IMR-90 (cell line): ENCODE measurements at regions of chr15 and their contacts with region 1.

Region 1: DNA sequence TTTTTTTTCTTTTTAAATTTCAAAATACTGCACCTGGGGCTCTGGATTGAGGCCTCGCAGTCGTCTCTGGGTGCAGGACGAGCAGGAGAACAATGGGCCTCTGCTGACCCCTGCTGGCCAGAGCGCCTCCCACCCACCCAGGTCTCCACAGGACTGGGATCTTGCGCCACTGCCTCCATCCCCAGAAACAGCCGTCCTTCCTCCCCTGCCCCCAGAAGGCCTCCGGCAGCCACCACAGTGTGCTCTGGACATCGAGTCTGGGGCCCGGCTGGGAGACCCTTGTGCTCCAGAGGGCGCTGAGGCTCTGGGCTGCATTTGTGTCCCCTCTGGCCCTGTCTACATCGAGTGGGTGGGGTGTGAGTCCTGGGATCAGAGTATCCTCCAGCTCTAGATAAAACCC is 6.6 kb upstream of the ACSBG1 start:
- DNase-seq: peak; percentile 59
- ATAC-seq: peak; percentile 99
- H3K4me3 ChIP-seq: no peak overlapping the region
- H3K27ac ChIP-seq: no peak overlapping the region
- H3K4me1 ChIP-seq: no peaks in the 10 kb centered on the region
- H3K27me3 ChIP-seq: peaks cover 20% of the 10 kb centered on the region
- CTCF ChIP-seq: peak; percentile 92
- POLR2A ChIP-seq: 0 out of 2 replicates have a peak, but pooled peaks have one; percentile 32
- RAD21 ChIP-seq: peak; percentile 91

Region 2: GRCh38 chr15:77901974-77902750 is 338.8 kb before region 1 on chr15:
- CTCF ChIA-PET with region 1: interaction called, 3 read pairs
- POLR2A ChIA-PET with region 1: no interaction called
- dilution Hi-C with region 1: no loop called
- in situ Hi-C with region 1: no loop called
- intact Hi-C with region 1: loop called (anchors 5 kb)
- DNase-seq: no peak
- ATAC-seq: no peak
- H3K4me3 ChIP-seq: no peak overlapping the region
- H3K27ac ChIP-seq: no peak overlapping the region
- H3K4me1 ChIP-seq: no peaks in the 10 kb centered on the region
- H3K27me3 ChIP-seq: peaks cover 12% of the 10 kb centered on the region; the same call in 1 of the 2 replicates
- CTCF ChIP-seq: 0 out of 2 replicates have a peak, but pooled peaks have one; percentile 11
- POLR2A ChIP-seq: no peak
- RAD21 ChIP-seq: no peak

Region 3: GRCh38 chr15:77959432-77959879 is 281.6 kb before region 1 on chr15:
- CTCF ChIA-PET with region 1: interaction called, 5 read pairs
- POLR2A ChIA-PET with region 1: no interaction called
- dilution Hi-C with region 1: no loop called
- in situ Hi-C with region 1: loop called (anchors 5 kb)
- intact Hi-C with region 1: loop called (anchors 1 kb)
- DNase-seq: peak; percentile 41
- ATAC-seq: peak; percentile 100
- H3K4me3 ChIP-seq: no peak overlapping the region
- H3K27ac ChIP-seq: no peak overlapping the region
- H3K4me1 ChIP-seq: no peaks in the 10 kb centered on the region
- H3K27me3 ChIP-seq: peaks cover 46% of the 10 kb centered on the region
- CTCF ChIP-seq: peak; percentile 90
- POLR2A ChIP-seq: no peak
- RAD21 ChIP-seq: peak; percentile 92

Region 4: DNA sequence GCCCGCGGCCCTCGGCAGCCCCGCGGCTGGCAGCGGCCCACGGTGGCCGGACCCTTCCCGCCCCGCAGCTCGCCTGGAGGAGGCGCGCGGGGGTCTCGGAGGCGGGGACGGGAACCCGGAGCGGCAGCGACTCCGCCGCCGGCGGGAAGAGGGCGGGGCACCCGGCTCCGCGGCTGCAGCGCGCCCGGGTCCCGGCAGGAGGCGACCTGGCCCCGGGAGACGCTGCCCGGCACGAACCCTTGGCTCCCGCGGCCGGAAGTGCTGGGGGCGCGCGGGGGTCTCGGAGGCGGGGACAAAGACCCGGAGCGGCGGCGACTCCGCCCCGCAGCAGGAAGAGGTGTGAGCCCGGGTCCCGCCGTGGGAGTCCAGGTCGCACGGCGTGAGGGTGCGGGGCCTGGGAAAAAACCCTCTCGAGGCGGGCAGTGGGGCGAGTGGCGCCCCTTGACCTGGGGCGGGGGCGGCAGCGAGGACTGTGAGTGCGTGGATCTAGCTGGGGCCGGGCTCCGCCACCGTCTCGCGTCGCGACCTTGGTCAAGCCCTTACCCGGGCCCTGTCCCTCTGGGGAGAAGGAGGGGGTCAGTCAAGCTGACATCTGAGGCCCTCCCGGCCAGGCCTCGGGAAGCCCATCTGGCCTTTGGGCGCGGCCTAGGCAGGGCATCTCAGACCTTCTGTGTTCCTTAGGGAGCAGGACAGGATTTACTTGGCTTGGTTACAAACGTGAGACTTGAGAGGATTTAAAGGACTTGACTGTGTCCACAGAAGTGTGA is 109.5 kb before region 1 on chr15 and contains the start of gene CIB2:
- CTCF ChIA-PET with region 1: interaction called, 4 read pairs
- POLR2A ChIA-PET with region 1: no interaction called
- dilution Hi-C with region 1: no loop called
- in situ Hi-C with region 1: no loop called
- intact Hi-C with region 1: loop called (anchors 5 kb)
- DNase-seq: peak; percentile 41
- ATAC-seq: peak; percentile 96
- H3K4me3 ChIP-seq: peak within 1 kb of the TSS; percentile 63
- H3K27ac ChIP-seq: peak within 1 kb of the TSS; percentile 38
- H3K4me1 ChIP-seq: peaks cover 4% of the 10 kb centered on the region
- H3K27me3 ChIP-seq: no peaks in the 10 kb centered on the region
- CTCF ChIP-seq: peak; percentile 72
- POLR2A ChIP-seq: 0 out of 2 replicates have a peak, but pooled peaks have one; percentile 30
- RAD21 ChIP-seq: peak; percentile 56
- total RNA-seq, gene CIB2: 2.2 and 2.5 TPM in 2 replicates

Region 5: DNA sequence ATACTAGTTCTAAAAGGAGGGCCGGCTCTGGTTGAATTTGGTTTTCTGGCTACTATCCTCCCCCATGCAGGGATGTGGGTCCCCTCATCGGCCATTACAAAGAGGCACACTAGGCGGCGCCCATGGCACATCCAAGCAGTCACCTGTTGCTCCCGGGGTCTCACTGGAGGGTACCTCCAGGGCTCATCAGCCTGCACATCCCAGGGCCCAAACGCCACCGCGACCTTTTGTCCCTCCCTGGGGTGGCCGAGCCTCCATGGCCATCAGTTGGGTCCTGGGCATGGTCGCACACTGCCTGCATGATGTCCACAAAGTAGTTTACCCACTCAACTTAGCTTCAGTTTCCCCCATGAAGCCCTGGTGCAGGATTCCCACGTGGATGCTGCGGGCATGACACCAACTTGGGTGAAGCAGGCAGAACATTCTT is 63.5 kb before region 1 on chr15:
- CTCF ChIA-PET with region 1: interaction called, 3 read pairs
- POLR2A ChIA-PET with region 1: no interaction called
- dilution Hi-C with region 1: no loop called
- in situ Hi-C with region 1: no loop called
- intact Hi-C with region 1: loop called (anchors 1 kb)
- DNase-seq: no peak
- ATAC-seq: peak; percentile 68
- H3K4me3 ChIP-seq: no peak overlapping the region
- H3K27ac ChIP-seq: no peak overlapping the region
- H3K4me1 ChIP-seq: no peaks in the 10 kb centered on the region
- H3K27me3 ChIP-seq: peaks cover 6% of the 10 kb centered on the region
- CTCF ChIP-seq: peak; percentile 59
- POLR2A ChIP-seq: no peak
- RAD21 ChIP-seq: peak; percentile 62